ENCODE measurements at regions of chr3 and their contacts with region 1.

Region 1: DNA sequence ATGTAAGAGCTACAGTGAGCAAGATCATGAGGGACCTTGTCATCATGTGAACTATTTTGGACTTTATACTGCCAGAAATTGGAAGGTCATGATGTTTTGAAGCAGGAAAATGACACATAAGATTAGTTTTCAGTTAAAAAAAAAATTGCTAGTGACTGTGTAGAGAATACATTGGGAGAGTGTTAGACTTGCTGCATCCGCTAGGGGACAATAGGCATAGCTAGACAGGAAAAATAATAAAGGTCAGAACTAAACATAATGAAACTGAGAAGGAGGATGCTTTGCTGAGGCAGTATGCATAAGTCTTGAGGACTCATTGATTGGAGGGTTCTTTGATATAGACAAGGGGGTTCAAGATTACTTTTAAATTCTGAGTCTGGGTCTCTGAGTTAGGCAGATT is 275.8 kb upstream of the KCNH8 start:
- DNase-seq: no peak
- H3K4me3 ChIP-seq: no peak overlapping the region
- H3K27ac ChIP-seq: no peak overlapping the region
- H3K4me1 ChIP-seq: no peaks in the 10 kb centered on the region
- H3K27me3 ChIP-seq: no peaks in the 10 kb centered on the region
- CTCF ChIP-seq: no peak
- POLR2A ChIP-seq: no peak

Region 2: DNA sequence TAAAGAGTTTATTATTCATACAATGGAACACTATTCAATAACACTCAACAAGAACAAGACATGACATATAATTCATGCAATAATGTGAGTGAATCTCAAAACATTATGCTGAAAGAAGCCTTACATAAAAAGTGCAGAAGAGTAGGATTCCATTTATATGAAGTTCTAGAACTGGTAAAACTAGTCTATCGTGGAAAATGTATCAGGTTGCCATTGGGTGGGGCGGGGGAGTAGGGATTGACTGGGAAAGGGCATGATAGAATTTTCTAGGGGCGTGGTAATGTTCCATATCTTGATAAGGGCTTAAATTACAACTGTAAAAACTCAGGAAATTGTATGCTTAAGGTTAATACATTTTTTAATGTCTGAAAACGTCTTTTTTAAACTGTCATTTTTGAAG is 695.2 kb before region 1 on chr3:
- intact Hi-C with region 1: no loop called
- DNase-seq: no peak
- H3K4me3 ChIP-seq: no peak overlapping the region
- H3K27ac ChIP-seq: no peak overlapping the region
- H3K4me1 ChIP-seq: no peaks in the 10 kb centered on the region
- H3K27me3 ChIP-seq: no peaks in the 10 kb centered on the region
- CTCF ChIP-seq: no peak
- POLR2A ChIP-seq: no peak

Region 3: GRCh38 chr3:18389108-18389733 is 483.2 kb before region 1 on chr3:
- intact Hi-C with region 1: no loop called
- DNase-seq: no peak
- H3K4me3 ChIP-seq: no peak overlapping the region
- H3K27ac ChIP-seq: no peak overlapping the region
- H3K4me1 ChIP-seq: no peaks in the 10 kb centered on the region
- H3K27me3 ChIP-seq: no peaks in the 10 kb centered on the region
- CTCF ChIP-seq: peak in 1 of 3 donors; percentile 36
- POLR2A ChIP-seq: no peak

Region 4: GRCh38 chr3:18891641-18892040 is 19.2 kb after region 1 on chr3:
- intact Hi-C with region 1: loop called (anchors 1 kb)
- DNase-seq: no peak
- H3K4me3 ChIP-seq: no peak overlapping the region
- H3K27ac ChIP-seq: no peak overlapping the region
- H3K4me1 ChIP-seq: no peaks in the 10 kb centered on the region
- H3K27me3 ChIP-seq: no peaks in the 10 kb centered on the region
- CTCF ChIP-seq: no peak
- POLR2A ChIP-seq: no peak

Measured in breast epithelium (tissue), 4 donors.